Mammary epithelial cell (primary cell): ENCODE measurements at regions of chr6 and their contacts with region 1.

Region 1: GRCh38 chr6:150685860-150686259 is 86.2 kb downstream of the PLEKHG1 start:
- DNase-seq: peak; percentile 72
- H3K4me3 ChIP-seq: no peak overlapping the region
- H3K27ac ChIP-seq: no peak overlapping the region
- H3K4me1 ChIP-seq: peaks cover 24% of the 10 kb centered on the region
- H3K27me3 ChIP-seq: no peaks in the 10 kb centered on the region
- CTCF ChIP-seq: peak; percentile 89 to 96

Region 2: DNA sequence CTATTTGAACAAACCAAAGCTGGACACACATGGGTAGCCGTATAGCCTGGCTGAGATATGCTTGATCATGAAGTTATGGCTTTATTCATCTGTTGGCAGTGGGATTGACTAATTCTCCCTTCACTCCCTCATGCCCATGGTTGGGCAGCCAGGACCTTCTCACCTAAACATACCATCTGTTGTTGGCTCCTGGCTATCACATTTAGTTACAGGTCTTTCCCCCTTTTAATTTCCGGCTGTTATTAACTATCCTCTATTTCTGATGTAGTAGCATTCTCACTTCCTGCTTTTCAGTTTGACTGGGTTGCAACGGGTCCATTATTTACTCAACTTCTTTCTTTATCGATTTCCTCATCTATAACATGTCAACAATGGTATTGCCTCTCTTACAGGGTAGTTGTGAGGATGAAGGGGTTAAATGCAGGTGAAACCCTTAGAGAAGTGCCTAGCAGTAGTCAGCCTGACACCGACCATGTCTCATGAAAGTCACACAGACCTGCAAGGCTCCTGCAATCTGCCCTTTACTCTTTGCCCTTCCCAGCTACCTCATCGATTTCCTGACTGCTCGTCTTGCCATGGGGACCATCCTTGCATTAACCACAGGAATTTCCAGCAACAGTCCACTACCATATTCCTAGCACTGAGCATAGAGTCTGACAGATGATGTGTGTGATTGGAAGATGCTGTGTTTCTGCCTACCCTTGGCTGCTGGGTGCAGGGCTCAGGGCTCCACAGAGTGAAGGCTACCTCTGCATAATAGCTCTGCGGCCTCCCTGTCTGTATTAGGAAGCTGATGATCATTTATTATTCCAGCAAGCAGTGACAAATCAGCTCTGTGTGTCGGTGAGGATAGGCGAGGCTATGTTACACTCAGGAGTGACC is 500.8 kb before region 1 on chr6:
- CTCF ChIA-PET with region 1: no interaction called
- dilution Hi-C with region 1: no loop called
- in situ Hi-C with region 1: no loop called
- intact Hi-C with region 1: no loop called
- DNase-seq: no peak
- H3K4me3 ChIP-seq: no peak overlapping the region
- H3K27ac ChIP-seq: no peak overlapping the region
- H3K4me1 ChIP-seq: peaks cover 3% of the 10 kb centered on the region
- H3K27me3 ChIP-seq: no peaks in the 10 kb centered on the region
- CTCF ChIP-seq: no peak

Region 3: DNA sequence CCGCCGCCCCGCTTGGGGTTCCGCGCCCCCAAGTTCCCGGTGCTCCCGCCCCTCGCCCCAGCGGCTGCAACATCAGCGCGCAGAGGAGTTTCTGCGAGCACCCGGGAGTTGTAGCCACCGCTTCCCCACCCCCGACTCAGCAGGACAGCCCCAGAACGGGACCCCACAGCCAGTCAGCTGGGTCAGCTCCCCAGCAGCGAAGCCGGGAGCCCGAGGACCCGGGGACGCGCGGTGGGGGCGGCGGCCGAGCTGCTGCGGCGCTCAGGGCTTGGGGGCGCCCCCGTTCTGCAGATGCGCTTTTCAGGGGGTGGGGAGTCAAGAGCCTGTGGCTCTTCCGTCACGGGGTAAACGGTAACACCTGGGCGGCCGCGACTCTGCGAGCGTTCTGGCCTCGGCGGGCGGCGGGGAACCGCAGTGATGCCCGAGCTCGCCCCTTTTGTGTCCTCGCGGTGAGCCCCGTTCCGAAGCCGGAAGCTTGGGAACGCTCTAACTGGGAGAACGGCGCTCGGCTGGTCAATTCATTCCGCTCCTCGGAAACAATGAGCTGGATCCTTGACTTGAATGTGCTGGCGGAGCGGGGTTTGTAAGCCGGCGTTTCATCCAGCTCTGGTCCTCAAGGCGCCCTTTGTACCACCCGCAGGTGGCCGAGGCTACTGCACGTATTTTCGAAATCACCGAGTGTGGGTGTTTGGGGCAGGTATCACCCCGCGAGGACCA is 85.4 kb before region 1 on chr6:
- CTCF ChIA-PET with region 1: interaction called, 3 read pairs
- dilution Hi-C with region 1: no loop called
- in situ Hi-C with region 1: no loop called
- intact Hi-C with region 1: loop called (anchors 5 kb)
- DNase-seq: peak; percentile 90
- H3K4me3 ChIP-seq: peak overlapping the region; percentile 69 to 81 (median 80)
- H3K27ac ChIP-seq: peak overlapping the region; percentile 47
- H3K4me1 ChIP-seq: peaks cover 15% of the 10 kb centered on the region
- H3K27me3 ChIP-seq: no peaks in the 10 kb centered on the region
- CTCF ChIP-seq: peak; percentile 53 to 79

Region 4: GRCh38 chr6:150741633-150742504 is 56.0 kb after region 1 on chr6:
- CTCF ChIA-PET with region 1: no interaction called
- dilution Hi-C with region 1: no loop called
- in situ Hi-C with region 1: no loop called
- intact Hi-C with region 1: loop called (anchors 1 kb)
- DNase-seq: no peak
- H3K4me3 ChIP-seq: no peak overlapping the region
- H3K27ac ChIP-seq: no peak overlapping the region
- H3K4me1 ChIP-seq: peaks cover 9% of the 10 kb centered on the region
- H3K27me3 ChIP-seq: no peaks in the 10 kb centered on the region
- CTCF ChIP-seq: peak; percentile 33 to 43

Region 5: GRCh38 chr6:151052021-151052646 is 366.3 kb after region 1 on chr6:
- CTCF ChIA-PET with region 1: interaction called, 17 read pairs
- dilution Hi-C with region 1: no loop called
- in situ Hi-C with region 1: no loop called
- intact Hi-C with region 1: no loop called
- DNase-seq: peak; percentile 94
- H3K4me3 ChIP-seq: no peak overlapping the region
- H3K27ac ChIP-seq: peak overlapping the region; percentile 70
- H3K4me1 ChIP-seq: peaks cover 21% of the 10 kb centered on the region
- H3K27me3 ChIP-seq: no peaks in the 10 kb centered on the region
- CTCF ChIP-seq: peak; percentile 29 to 63